ENCODE measurements at regions of chr7 and their contacts with region 1.

Region 1: GRCh38 chr7:142782922-142783900 is 12.4 kb downstream of the PRSS2 start:
- DNase-seq: peak; percentile 72 to 90 (median 87)
- H3K4me3 ChIP-seq: no peak overlapping the region
- H3K27ac ChIP-seq: no peak overlapping the region
- H3K4me1 ChIP-seq: no peaks in the 10 kb centered on the region
- H3K27me3 ChIP-seq: no peaks in the 10 kb centered on the region
- CTCF ChIP-seq: peak in 2 of 3 donors; percentile 80 to 93
- EP300 ChIP-seq: no peak
- POLR2A ChIP-seq: no peak

Region 2: DNA sequence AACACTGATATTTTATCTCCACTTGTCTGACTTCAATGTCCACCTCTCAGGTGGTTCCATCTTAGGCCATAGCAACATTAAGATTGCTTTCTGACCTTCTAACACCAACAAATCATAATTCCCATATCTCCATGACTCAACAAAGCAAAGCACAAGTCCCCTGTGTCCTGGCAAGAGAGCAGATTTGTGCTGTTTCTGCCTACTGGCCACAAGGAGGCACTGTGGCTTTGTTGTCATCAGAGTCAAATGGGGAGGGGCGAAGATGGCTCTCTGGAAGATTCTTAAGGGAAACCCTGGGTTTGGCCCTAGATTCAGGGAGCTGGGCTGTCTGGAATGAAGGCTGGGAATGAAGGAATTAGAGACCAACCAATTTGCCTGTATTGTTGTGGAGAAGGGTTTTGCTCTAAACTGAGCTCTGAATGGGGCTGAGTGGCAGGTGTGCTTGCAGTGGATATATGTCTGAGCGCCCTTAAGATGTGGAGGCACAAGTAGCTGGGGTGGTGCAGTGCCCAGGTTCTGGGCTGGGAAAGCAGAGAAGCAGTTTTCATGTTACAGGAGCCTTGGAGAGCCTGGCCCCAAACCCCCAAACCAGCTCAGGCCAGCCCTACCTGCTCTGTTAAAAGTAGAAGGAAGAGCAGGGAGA is 370.5 kb before region 1 on chr7:
- intact Hi-C with region 1: no loop called
- DNase-seq: no peak
- H3K4me3 ChIP-seq: no peak overlapping the region
- H3K27ac ChIP-seq: no peak overlapping the region
- H3K4me1 ChIP-seq: no peaks in the 10 kb centered on the region
- H3K27me3 ChIP-seq: no peaks in the 10 kb centered on the region
- CTCF ChIP-seq: no peak
- EP300 ChIP-seq: no peak
- POLR2A ChIP-seq: no peak

Region 3: GRCh38 chr7:142632291-142633134 is 150.7 kb before region 1 on chr7:
- intact Hi-C with region 1: loop called in 1 of 4 experiments (anchors 10 kb)
- DNase-seq: peak in 4 of 5 donors; percentile 15 to 49 (median 23)
- H3K4me3 ChIP-seq: no peak overlapping the region
- H3K27ac ChIP-seq: no peak overlapping the region
- H3K4me1 ChIP-seq: no peaks in the 10 kb centered on the region
- H3K27me3 ChIP-seq: no peaks in the 10 kb centered on the region
- CTCF ChIP-seq: peak in 2 of 3 donors; percentile 13 to 39
- EP300 ChIP-seq: no peak
- POLR2A ChIP-seq: no peak

Region 4: DNA sequence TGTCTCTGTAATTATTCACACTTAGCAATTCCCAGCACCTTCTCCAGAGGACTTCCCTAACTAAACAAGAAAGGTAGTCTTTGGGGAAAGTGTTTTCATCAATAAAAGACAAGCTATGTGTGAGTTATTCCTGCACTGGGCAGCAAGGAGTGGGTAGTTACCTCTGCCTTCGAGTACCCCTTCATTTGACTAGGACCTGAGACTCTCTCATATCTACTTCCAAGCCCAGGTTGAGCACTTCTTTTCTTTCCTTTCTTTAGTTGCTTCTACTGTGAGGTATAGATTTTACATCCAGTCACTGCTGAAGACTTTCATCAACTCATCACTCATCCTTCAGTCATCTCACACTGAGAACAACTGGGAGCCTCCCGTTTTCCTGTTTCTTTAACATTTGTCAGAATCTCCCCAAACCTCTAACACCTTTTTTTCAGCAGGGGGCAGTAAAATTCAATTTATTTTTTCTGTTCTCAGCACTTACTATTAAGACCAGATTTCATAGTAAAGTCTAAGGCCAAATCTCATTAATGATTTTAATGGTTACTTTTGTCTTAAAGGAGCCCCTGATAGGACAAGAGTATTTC is 114.0 kb before region 1 on chr7:
- intact Hi-C with region 1: loop called in 1 of 4 experiments (anchors 10 kb)
- DNase-seq: no peak
- H3K4me3 ChIP-seq: no peak overlapping the region
- H3K27ac ChIP-seq: no peak overlapping the region
- H3K4me1 ChIP-seq: no peaks in the 10 kb centered on the region
- H3K27me3 ChIP-seq: no peaks in the 10 kb centered on the region
- CTCF ChIP-seq: peak in 1 of 3 donors; percentile 21
- EP300 ChIP-seq: no peak
- POLR2A ChIP-seq: no peak

Region 5: GRCh38 chr7:142722248-142722794 is 60.9 kb before region 1 on chr7:
- intact Hi-C with region 1: no loop called
- DNase-seq: no peak
- H3K4me3 ChIP-seq: no peak overlapping the region
- H3K27ac ChIP-seq: no peak overlapping the region
- H3K4me1 ChIP-seq: peaks cover 2% of the 10 kb centered on the region
- H3K27me3 ChIP-seq: no peaks in the 10 kb centered on the region
- CTCF ChIP-seq: no peak
- EP300 ChIP-seq: no peak
- POLR2A ChIP-seq: no peak

Measured in ovary (tissue), 10 donors.